CD8-positive, alpha-beta T cell (primary cell): ENCODE measurements at regions of chr18 and their contacts with region 1.

Region 1: DNA sequence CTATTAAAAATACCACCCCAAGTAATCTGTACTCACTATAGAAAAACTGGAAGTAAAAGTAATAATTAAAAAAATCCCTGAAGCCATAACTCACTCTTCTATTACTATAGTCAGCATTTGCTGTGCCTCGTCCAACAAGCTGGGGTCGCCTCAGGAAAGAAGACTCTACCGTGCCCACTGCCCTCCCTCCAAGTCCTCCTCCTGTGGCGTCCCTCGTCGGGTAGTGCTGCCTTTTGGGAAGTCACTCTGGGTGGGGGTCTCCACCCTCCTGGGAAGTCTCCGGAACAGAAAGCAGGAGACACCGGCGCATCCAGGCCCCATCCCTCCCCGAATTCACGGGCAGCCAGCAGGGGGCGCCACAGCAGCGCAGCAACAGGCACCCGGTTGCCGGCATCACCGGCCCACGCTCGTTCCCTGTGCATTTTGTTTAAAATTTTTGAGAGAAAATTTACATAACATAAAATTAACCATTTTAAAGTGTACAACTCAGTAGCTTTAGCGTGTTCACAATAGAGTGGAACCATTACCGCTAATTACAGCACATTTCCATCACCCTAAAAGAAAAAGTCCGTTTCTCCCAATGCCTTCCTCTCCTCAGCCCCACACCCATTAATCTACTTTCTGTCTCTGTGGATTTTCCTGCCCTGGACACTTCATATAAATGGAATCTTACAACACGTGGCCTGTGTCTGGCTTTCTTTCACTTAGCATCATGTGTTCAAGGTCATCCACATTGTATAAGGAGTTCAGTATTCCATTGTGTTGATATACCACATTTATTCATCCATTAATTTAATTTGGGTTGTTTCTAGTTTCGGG is 62.2 kb downstream of the ADNP2 start:
- DNase-seq: peak in 8 of 9 experiments; percentile 18 to 73 (median 62)
- ATAC-seq: no peak
- H3K4me3 ChIP-seq: no peak overlapping the region
- H3K4me3 Mint-ChIP-seq: peak overlapping the region; percentile 13
- H3K27ac ChIP-seq: no peak overlapping the region
- H3K27ac Mint-ChIP-seq: peak overlapping the region; percentile 33
- H3K4me1 ChIP-seq: peaks cover 26% of the 10 kb centered on the region
- H3K4me1 Mint-ChIP-seq: peaks cover 35% of the 10 kb centered on the region
- H3K27me3 ChIP-seq: peaks cover 0 to 2% of the 10 kb centered on the region in 2 experiments
- H3K27me3 Mint-ChIP-seq: peaks cover 35% of the 10 kb centered on the region
- CTCF ChIP-seq: peak; percentile 82

Region 2: DNA sequence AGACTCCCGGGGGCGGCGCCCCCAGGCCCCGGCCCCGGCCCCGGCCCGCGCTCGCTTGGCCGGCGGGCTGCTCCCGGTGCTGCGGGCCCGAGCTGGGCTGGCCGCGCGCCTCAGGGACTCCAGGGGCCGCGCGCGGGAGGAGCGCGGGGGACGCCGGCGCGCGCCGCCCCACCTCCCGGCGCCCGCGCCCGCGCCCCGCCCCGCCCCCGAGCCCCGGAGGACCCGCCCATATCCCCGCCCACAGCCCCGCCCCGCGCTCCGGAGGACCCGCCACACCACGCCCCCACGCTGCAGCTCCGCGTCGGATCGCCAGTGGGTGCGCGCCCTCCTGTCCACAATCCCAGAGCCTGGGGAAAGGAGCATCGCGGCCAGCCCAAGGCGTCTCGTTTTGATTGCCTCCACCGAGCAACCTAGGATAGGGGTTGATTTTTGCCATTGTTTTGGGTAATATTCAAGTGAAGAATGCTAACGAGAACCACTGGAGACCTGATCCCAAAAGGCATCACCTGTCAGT is 76.2 kb after region 1 on chr18 and contains the start of gene PARD6G:
- CTCF ChIA-PET with region 1: interaction called, 3 read pairs
- POLR2A ChIA-PET with region 1: no interaction called
- intact Hi-C with region 1: loop called in 1 of 2 experiments (anchors 1 kb)
- DNase-seq: peak; percentile 34 to 78 (median 62)
- ATAC-seq: peak; percentile 87
- H3K4me3 ChIP-seq: peak within 1 kb of the TSS; percentile 45
- H3K4me3 Mint-ChIP-seq: peak within 1 kb of the TSS; percentile 73
- H3K27ac ChIP-seq: no peak within 1 kb of the TSS
- H3K27ac Mint-ChIP-seq: no peak within 1 kb of the TSS
- H3K4me1 ChIP-seq: no peaks in the 10 kb centered on the region
- H3K4me1 Mint-ChIP-seq: peaks cover 6% of the 10 kb centered on the region
- H3K27me3 ChIP-seq: peaks cover 8 to 11% of the 10 kb centered on the region in 2 experiments
- H3K27me3 Mint-ChIP-seq: peaks cover 34% of the 10 kb centered on the region
- CTCF ChIP-seq: no peak
- total RNA-seq, gene PARD6G: 3.7 to 3.8 TPM